Left colon (tissue), 2 donors: ENCODE measurements at regions of chr3 and their contacts with region 1.

Region 1: GRCh38 chr3:185176750-185177359 is 24.0 kb upstream of the C3orf70 start:
- DNase-seq: peak in 1 of 2 donors; percentile 52
- ATAC-seq: no peak

Region 2: DNA sequence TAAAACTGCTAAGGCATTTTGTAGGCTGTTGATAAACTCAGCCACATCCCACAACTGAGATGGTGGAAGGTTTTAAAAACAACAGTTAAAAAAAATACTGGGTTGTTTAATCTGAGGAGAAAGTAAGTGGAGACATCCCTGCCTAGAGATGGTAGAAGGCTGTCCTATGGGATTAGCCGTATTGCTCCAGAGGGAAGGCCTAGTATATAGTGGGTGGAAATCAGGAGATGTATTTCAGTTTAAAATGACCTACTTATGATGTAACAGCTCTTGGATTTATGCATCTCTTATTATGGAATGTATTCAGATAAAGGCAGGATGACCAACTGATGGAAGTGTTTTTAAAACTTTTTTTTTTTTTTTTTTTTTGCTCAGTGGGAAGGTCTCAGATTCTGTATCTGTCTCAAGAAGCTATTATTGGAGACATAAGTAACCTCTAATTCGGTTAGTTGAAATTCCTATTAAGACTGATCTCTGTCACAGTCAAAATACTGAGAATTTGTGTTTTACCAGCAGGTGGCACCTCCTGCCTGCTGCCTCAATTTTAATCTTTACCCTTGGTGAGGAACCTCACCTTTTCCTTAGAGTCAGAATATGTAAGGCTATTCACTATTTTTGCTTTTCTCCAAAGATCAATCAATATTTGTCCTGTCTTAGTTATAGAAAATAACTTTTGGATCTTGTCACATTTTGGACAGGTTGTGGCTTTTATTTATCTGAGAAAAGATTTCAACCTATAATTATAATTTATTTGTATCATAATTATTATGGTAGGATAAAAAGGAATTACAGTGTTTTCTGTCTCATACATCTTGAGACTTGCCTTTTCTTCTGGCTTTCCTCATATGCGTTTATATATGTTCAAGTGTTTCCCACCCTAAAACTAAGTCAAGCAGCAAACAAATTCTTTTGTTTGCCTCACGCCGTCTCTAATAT is 301.9 kb before region 1 on chr3:
- intact Hi-C with region 1: loop called in 1 of 2 experiments (anchors 10 kb)
- DNase-seq: no peak
- ATAC-seq: peak; percentile 69

Region 3: GRCh38 chr3:185070491-185071286 is 106.2 kb before region 1 on chr3:
- intact Hi-C with region 1: loop called in 1 of 2 experiments (anchors 5 kb)
- DNase-seq: peak; percentile 71 to 77
- ATAC-seq: peak; percentile 78

Region 4: DNA sequence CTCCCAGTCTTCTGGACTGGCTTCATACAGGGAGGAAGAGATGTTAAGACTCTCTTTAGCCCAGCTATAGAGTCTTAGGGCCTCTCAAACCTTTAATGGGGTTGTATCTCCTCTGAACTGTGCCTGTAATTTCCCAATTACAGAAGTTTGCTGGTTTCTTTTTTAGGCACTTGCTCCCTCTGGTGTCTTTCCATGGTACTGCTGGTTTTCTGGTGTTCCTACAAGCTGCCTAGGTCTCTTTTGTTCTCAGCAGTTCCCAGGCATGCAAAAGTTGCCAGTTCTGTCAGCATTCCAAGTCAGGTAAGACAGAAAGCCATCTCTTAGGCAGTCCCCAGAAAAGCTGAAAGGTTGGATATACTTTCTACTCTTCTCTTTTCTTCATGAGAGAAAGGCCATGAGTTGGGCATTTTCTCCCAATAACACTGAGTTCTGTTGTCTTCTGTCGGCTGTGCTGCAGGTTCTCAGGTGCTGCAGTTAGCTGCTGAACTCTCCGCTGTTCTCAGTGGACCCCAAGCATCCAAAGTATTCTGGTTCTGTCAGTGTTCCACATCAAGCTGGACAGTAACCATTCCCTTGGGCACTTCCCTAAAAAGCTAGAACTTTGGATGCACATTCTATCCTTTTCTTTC is 131.4 kb after region 1 on chr3:
- intact Hi-C with region 1: no loop called
- DNase-seq: peak in 1 of 2 donors; percentile 66
- ATAC-seq: peak; percentile 73